PC-3 (cell line): ENCODE measurements at regions of chr6 and their contacts with region 1.

Region 1: DNA sequence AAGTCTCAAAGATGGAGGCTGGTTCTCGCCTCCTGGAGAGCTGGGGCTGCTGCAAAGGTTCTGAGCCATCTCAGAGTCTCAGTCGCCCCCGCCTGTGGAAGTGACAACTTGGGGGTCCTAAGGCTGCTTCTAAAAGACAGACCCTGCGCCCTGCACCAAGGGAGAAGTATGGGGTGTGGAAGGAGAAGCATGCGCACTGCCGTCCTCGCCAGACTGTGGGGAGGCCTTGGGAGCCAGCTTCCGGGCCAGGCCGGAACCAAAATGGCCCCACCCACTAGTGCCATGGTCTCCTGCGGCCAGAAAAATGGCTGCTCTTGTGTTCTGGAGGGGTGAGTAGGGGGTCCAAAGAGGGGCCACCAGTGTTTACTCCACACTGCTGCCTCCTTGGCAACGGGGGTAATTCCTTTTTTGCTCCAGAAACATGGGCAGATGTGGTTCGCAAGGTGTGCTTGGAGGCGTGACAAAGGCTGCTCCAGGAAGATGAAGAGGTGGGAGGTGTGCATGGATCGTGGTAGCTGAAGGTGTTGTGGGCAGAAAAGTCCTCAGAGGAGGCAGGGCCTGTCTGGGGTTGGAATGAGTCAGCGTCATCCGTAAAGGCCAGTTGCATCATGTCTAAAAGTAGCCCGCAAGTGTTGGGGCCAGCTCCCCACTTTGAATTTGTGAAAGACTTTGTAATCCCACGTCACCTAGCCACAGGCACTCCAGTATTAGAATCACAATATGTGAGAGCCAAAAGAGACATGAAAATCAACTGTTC is 329.8 kb upstream of the SOX4 start:
- DNase-seq: peak; percentile 30
- ATAC-seq: no peak
- H3K4me3 ChIP-seq: no peak overlapping the region
- H3K27ac ChIP-seq: peak overlapping the region; percentile 84
- H3K4me1 ChIP-seq: peaks cover 28% of the 10 kb centered on the region
- H3K27me3 ChIP-seq: no peaks in the 10 kb centered on the region
- CTCF ChIP-seq: no peak

Region 2: DNA sequence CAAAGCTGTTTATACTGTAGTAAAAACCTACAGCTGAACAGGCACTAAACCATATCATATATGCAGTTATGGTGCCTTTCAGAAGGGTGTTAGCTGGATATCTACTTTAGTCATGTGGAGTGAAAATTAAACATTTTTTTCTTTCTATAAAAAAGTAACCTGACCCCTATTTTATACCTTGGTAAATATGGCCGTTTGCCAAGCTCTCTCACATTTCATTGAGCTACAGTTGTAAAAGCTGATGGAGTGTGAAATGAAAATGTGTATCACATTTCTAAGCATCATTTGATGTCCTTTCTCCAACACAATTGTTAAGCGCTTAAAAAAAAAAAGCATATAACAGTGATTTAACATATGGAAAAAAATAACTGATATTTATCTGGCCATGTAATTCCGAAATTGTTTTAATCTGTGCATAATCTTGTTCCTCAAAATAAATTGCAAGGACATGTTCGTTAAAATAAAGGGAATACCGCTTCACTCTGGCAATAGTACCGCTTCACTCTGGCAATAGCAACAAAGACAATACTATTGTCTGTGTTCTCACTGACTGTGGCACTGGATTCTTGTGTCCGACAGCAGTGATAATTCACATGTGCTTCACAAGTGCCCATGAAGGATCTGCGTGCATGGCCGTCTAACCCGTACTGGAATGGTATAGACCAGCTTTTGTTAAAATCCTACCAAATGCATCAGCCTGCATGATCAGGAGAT is 61.9 kb before region 1 on chr6:
- CTCF ChIA-PET with region 1: no interaction called
- POLR2A ChIA-PET with region 1: no interaction called
- intact Hi-C with region 1: loop called (anchors 1 kb)
- DNase-seq: peak; percentile 82
- ATAC-seq: peak; percentile 93
- H3K4me3 ChIP-seq: no peak overlapping the region
- H3K27ac ChIP-seq: no peak overlapping the region
- H3K4me1 ChIP-seq: peaks cover 14% of the 10 kb centered on the region
- H3K27me3 ChIP-seq: no peaks in the 10 kb centered on the region
- CTCF ChIP-seq: no peak

Region 3: GRCh38 chr6:21227486-21227885 is 36.2 kb before region 1 on chr6:
- CTCF ChIA-PET with region 1: no interaction called
- POLR2A ChIA-PET with region 1: no interaction called
- intact Hi-C with region 1: loop called (anchors 2 kb)
- DNase-seq: peak; percentile 93
- ATAC-seq: peak; percentile 98
- H3K4me3 ChIP-seq: peak overlapping the region; percentile 9; the same call in 1 of the 2 replicates
- H3K27ac ChIP-seq: peak overlapping the region; percentile 78
- H3K4me1 ChIP-seq: peaks cover 33% of the 10 kb centered on the region
- H3K27me3 ChIP-seq: no peaks in the 10 kb centered on the region
- CTCF ChIP-seq: 0 out of 2 replicates have a peak, but pooled peaks have one; percentile 13

Region 4: GRCh38 chr6:21245488-21245887 is 18.2 kb before region 1 on chr6:
- CTCF ChIA-PET with region 1: no interaction called
- POLR2A ChIA-PET with region 1: no interaction called
- intact Hi-C with region 1: no loop called
- DNase-seq: no peak
- ATAC-seq: no peak
- H3K4me3 ChIP-seq: no peak overlapping the region
- H3K27ac ChIP-seq: no peak overlapping the region
- H3K4me1 ChIP-seq: no peaks in the 10 kb centered on the region
- H3K27me3 ChIP-seq: no peaks in the 10 kb centered on the region
- CTCF ChIP-seq: no peak

Region 5: GRCh38 chr6:21414065-21414464 is 150.4 kb after region 1 on chr6:
- CTCF ChIA-PET with region 1: no interaction called
- POLR2A ChIA-PET with region 1: no interaction called
- intact Hi-C with region 1: no loop called
- DNase-seq: no peak
- ATAC-seq: no peak
- H3K4me3 ChIP-seq: no peak overlapping the region
- H3K27ac ChIP-seq: no peak overlapping the region
- H3K4me1 ChIP-seq: no peaks in the 10 kb centered on the region
- H3K27me3 ChIP-seq: no peaks in the 10 kb centered on the region
- CTCF ChIP-seq: no peak